Spleen (tissue), 13 donors: ENCODE measurements at regions of chr1 and their contacts with region 1.

Region 1: GRCh38 chr1:85307987-85308832 is 31.8 kb upstream of the BCL10 start:
- DNase-seq: peak; percentile 93
- H3K4me3 ChIP-seq: peak overlapping the region in 1 of 8 donors; percentile 29
- H3K27ac ChIP-seq: no peak overlapping the region
- H3K4me1 ChIP-seq: peaks cover 0 to 11% (median 9%) of the 10 kb centered on the region in 6 donors
- H3K27me3 ChIP-seq: peaks cover 0 to 15% (median 0%) of the 10 kb centered on the region in 7 donors
- CTCF ChIP-seq: peak; percentile 75 to 94 (median 89)
- POLR2A ChIP-seq: no peak

Region 2: GRCh38 chr1:85406887-85407533 is 98.8 kb after region 1 on chr1:
- intact Hi-C with region 1: no loop called
- DNase-seq: no peak
- H3K4me3 ChIP-seq: no peak overlapping the region
- H3K27ac ChIP-seq: peak overlapping the region; percentile 1 to 56 (median 22)
- H3K4me1 ChIP-seq: peaks cover 0 to 16% (median 0%) of the 10 kb centered on the region in 6 donors
- H3K27me3 ChIP-seq: no peaks in the 10 kb centered on the region
- CTCF ChIP-seq: no peak
- POLR2A ChIP-seq: no peak

Region 3: GRCh38 chr1:85692730-85693314 is 384.6 kb after region 1 on chr1:
- intact Hi-C with region 1: loop called (anchors 5 kb)
- DNase-seq: no peak
- H3K4me3 ChIP-seq: no peak overlapping the region
- H3K27ac ChIP-seq: no peak overlapping the region
- H3K4me1 ChIP-seq: no peaks in the 10 kb centered on the region
- H3K27me3 ChIP-seq: no peaks in the 10 kb centered on the region
- CTCF ChIP-seq: peak in 4 of 11 experiments; percentile 8 to 22 (median 14)
- POLR2A ChIP-seq: no peak